ENCODE measurements at regions of chr18 and their contacts with region 1.

Region 1: DNA sequence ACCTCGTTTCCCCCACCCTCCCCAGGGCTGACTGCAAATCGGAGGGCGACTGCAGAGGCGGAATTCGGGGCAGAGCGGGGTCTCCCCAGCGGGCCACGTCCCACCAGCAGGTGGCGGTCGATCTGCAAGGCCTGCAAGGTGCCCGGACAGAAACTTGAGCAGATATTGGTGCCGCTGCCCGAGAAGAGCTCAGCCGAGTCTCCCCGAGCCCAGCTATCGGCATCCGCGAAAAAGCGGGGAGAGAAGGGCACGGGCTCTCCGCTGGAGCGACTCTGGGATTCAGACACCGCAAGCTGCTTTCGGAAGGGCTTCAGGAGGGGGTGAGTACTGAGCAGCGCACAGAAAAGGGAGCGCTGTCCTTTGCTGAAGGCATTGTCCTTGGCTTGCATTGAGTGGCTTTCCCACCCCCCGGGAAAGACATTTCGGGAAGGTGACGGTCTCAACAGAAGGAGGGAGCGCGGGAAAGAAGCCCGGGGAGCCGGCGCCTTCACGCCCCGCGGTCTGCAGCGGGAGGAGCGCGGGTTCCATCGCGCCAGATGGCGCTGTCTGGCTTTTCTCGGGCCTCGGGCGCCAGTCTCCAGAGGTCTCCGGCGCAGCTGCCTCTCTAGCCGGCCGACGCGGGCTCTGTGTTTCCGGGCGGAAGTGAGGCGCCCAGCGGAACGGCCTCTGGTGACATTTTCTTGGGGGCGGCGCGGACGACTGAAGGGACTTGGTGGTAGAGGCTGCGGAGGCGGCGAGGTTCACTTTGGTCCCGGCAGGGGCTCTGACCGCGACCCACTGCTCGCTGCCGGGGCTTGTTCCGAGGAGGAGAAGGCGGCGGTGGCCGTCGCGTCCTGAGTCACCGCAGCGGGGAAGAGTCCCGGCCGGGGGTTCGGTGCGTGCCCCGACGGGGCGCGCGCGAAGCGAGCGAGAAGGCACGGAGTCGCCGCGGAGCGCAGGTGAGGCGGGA is 69.5 kb downstream of the HAUS1 start:
- DNase-seq: peak; percentile 30
- H3K4me3 ChIP-seq: peak overlapping the region; percentile 98
- H3K27me3 ChIP-seq: no peaks in the 10 kb centered on the region
- CTCF ChIP-seq: peak; percentile 97

Region 2: DNA sequence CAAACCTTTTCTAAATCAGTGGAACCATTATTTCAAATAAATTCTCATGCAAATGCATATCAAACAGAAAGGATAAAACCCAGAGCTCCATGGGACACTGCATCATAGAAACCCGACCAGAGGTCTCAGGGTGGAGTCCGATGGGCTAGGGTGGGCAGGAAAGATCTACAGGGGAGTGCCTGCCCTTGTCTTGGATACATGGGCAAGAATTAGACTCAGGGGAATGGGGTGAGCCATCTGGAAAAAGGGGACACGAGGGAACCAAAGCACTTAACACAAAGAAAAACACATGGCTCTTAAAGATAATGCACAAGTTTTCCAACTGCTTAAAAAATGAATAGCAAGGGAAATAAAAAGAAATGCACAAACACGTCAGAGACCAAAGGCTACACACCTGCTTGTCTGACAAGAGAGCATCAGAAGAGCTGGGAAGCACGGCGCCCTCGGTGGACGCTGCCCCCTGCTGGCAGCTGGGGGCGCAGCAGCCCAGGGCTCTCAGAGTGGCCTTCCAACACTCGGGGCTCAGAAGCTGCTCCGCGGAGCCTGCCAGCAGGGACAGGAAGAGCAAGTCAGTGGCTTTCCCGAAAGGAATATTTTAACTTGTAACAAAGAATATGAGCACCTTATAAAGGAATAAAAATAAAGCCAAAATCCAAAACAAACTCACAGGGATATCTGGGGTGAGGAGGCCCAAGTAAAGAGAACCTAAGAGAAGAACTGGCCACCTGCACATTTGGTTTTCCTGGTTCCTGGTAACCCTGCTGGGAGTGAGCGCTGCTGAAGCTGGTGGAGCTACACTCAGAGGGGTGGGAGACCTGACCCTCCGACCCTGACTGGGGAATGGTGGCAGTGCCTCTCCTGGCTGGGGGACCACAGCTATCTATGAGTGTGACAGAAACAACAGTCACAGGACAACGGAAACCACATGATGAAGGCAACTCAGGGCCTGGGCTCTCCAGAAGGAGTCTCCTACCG is 293.7 kb before region 1 on chr18:
- CTCF ChIA-PET with region 1: no interaction called
- POLR2A ChIA-PET with region 1: no interaction called
- DNase-seq: no peak
- H3K4me3 ChIP-seq: no peak overlapping the region
- H3K27me3 ChIP-seq: no peaks in the 10 kb centered on the region
- CTCF ChIP-seq: peak; percentile 100

Region 3: GRCh38 chr18:46148810-46149209 is 24.9 kb before region 1 on chr18:
- CTCF ChIA-PET with region 1: interaction called, 26 read pairs
- POLR2A ChIA-PET with region 1: no interaction called
- DNase-seq: no peak
- H3K4me3 ChIP-seq: no peak overlapping the region
- H3K27me3 ChIP-seq: no peaks in the 10 kb centered on the region
- CTCF ChIP-seq: peak; percentile 65

Region 4: DNA sequence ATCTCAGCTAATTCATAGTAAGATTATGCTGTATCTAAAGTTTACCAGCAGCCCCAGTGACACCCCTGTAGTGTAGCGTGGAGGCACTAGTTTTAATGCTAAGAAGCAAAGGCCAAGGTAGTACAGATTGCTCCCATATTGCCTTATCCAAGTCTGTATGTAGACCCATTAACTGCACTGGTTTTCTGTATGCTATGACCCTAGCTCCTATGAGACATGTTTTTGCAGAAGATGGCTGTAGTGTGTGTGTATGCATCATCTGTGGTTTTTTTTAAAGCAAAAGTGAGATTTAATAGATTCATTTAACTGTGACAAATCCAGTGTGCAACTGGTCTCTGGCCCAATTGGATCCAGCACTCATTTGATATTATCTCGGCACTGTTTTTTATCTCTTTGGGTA is 17.0 kb after region 1 on chr18:
- CTCF ChIA-PET with region 1: interaction called, 12 read pairs
- POLR2A ChIA-PET with region 1: no interaction called
- DNase-seq: no peak
- H3K4me3 ChIP-seq: no peak overlapping the region
- H3K27me3 ChIP-seq: no peaks in the 10 kb centered on the region
- CTCF ChIP-seq: no peak

Region 5: GRCh38 chr18:46264235-46264893 is 90.7 kb after region 1 on chr18:
- CTCF ChIA-PET with region 1: interaction called, 15 read pairs
- POLR2A ChIA-PET with region 1: no interaction called
- DNase-seq: no peak
- H3K4me3 ChIP-seq: no peak overlapping the region
- H3K27me3 ChIP-seq: no peaks in the 10 kb centered on the region
- CTCF ChIP-seq: no peak

Region 6: GRCh38 chr18:46281185-46282176 is 107.8 kb after region 1 on chr18:
- CTCF ChIA-PET with region 1: interaction called, 69 read pairs
- POLR2A ChIA-PET with region 1: no interaction called
- DNase-seq: no peak
- H3K4me3 ChIP-seq: no peak overlapping the region
- H3K27me3 ChIP-seq: no peaks in the 10 kb centered on the region
- CTCF ChIP-seq: peak; percentile 93

Region 7: DNA sequence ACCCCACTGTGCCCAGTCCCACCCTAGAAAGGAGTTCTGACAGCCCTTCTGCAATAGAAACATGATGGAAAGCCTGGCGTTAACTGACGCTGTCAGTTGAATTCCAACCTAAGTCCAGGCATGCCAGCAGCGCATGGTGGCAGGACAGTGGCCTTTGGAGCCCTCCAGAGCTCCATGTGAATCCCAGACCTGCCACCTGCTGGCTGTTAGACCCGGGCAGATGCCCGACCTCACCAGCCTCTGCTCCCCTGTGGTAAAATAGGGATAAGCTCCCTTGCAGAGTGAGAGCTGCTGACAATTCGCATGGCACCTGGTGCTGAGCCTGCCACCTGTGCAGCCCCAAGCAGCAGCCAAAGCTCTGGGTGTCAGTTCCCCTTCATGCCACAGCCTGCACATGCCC is 344.8 kb after region 1 on chr18:
- CTCF ChIA-PET with region 1: interaction called, 15 read pairs
- POLR2A ChIA-PET with region 1: no interaction called
- DNase-seq: no peak
- H3K4me3 ChIP-seq: no peak overlapping the region
- H3K27me3 ChIP-seq: no peaks in the 10 kb centered on the region
- CTCF ChIP-seq: 0 out of 2 replicates have a peak, but pooled peaks have one; percentile 10